CD8-positive, alpha-beta memory T cell (primary cell): ENCODE measurements at regions of chr5 and their contacts with region 1.

Region 1: GRCh38 chr5:134904630-134905245 is at the start of gene PCBD2:
- DNase-seq: peak; percentile 84 to 94 (median 89)
- H3K4me3 ChIP-seq: peak within 1 kb of the TSS; percentile 71
- H3K4me3 Mint-ChIP-seq: peak within 1 kb of the TSS; percentile 93 to 98 (median 96)
- H3K27ac ChIP-seq: peak within 1 kb of the TSS; percentile 87
- H3K27ac Mint-ChIP-seq: peak within 1 kb of the TSS; percentile 97 to 99 (median 99)
- H3K4me1 ChIP-seq: no peaks in the 10 kb centered on the region
- H3K4me1 Mint-ChIP-seq: peaks cover 5 to 12% (median 10%) of the 10 kb centered on the region in 3 donors
- H3K27me3 ChIP-seq: no peaks in the 10 kb centered on the region
- H3K27me3 Mint-ChIP-seq: no peaks in the 10 kb centered on the region
- total RNA-seq, gene PCBD2: 11.5 to 13.6 TPM

Region 2: GRCh38 chr5:134738133-134738962 is 166.4 kb before region 1 on chr5 and contains the start of gene CAMLG:
- CTCF ChIA-PET with region 1: interaction called, 39 read pairs
- POLR2A ChIA-PET with region 1: interaction called, 29 read pairs
- DNase-seq: peak; percentile 95 to 98 (median 96)
- H3K4me3 ChIP-seq: peak within 1 kb of the TSS; percentile 84
- H3K4me3 Mint-ChIP-seq: peak within 1 kb of the TSS; percentile 91 to 97 (median 95)
- H3K27ac ChIP-seq: peak within 1 kb of the TSS; percentile 86
- H3K27ac Mint-ChIP-seq: peak within 1 kb of the TSS; percentile 90 to 98 (median 95)
- H3K4me1 ChIP-seq: peaks cover 19% of the 10 kb centered on the region
- H3K4me1 Mint-ChIP-seq: peaks cover 23 to 42% (median 40%) of the 10 kb centered on the region in 3 donors
- H3K27me3 ChIP-seq: no peaks in the 10 kb centered on the region
- H3K27me3 Mint-ChIP-seq: no peaks in the 10 kb centered on the region
- total RNA-seq, gene CAMLG: 23.1 to 23.6 TPM

Region 3: GRCh38 chr5:134758504-134759341 is 146.0 kb before region 1 on chr5 and contains the start of gene DDX46:
- CTCF ChIA-PET with region 1: interaction called, 11 read pairs
- POLR2A ChIA-PET with region 1: no interaction called
- DNase-seq: peak; percentile 89 to 94 (median 90)
- H3K4me3 ChIP-seq: peak within 1 kb of the TSS; percentile 96
- H3K4me3 Mint-ChIP-seq: peak within 1 kb of the TSS; percentile 96 to 100 (median 100)
- H3K27ac ChIP-seq: peak within 1 kb of the TSS; percentile 78
- H3K27ac Mint-ChIP-seq: peak within 1 kb of the TSS; percentile 83 to 100 (median 98)
- H3K4me1 ChIP-seq: peaks cover 21% of the 10 kb centered on the region
- H3K4me1 Mint-ChIP-seq: peaks cover 36 to 46% (median 44%) of the 10 kb centered on the region in 3 donors
- H3K27me3 ChIP-seq: no peaks in the 10 kb centered on the region
- H3K27me3 Mint-ChIP-seq: no peaks in the 10 kb centered on the region
- total RNA-seq, gene DDX46: 81.3 to 83.8 TPM

Region 4: GRCh38 chr5:134845852-134846640 is 58.7 kb before region 1 on chr5 and contains the start of gene C5orf24:
- CTCF ChIA-PET with region 1: interaction called, 16 read pairs
- POLR2A ChIA-PET with region 1: interaction called, 21 read pairs
- DNase-seq: peak; percentile 84 to 94 (median 90)
- H3K4me3 ChIP-seq: peak within 1 kb of the TSS; percentile 70
- H3K4me3 Mint-ChIP-seq: peak within 1 kb of the TSS; percentile 84 to 96 (median 88)
- H3K27ac ChIP-seq: peak within 1 kb of the TSS; percentile 92
- H3K27ac Mint-ChIP-seq: peak within 1 kb of the TSS; percentile 92 to 98 (median 96)
- H3K4me1 ChIP-seq: peaks cover 25% of the 10 kb centered on the region
- H3K4me1 Mint-ChIP-seq: peaks cover 30 to 40% (median 39%) of the 10 kb centered on the region in 3 donors
- H3K27me3 ChIP-seq: no peaks in the 10 kb centered on the region
- H3K27me3 Mint-ChIP-seq: no peaks in the 10 kb centered on the region
- total RNA-seq, gene C5orf24: 28.9 to 29.8 TPM

Region 5: DNA sequence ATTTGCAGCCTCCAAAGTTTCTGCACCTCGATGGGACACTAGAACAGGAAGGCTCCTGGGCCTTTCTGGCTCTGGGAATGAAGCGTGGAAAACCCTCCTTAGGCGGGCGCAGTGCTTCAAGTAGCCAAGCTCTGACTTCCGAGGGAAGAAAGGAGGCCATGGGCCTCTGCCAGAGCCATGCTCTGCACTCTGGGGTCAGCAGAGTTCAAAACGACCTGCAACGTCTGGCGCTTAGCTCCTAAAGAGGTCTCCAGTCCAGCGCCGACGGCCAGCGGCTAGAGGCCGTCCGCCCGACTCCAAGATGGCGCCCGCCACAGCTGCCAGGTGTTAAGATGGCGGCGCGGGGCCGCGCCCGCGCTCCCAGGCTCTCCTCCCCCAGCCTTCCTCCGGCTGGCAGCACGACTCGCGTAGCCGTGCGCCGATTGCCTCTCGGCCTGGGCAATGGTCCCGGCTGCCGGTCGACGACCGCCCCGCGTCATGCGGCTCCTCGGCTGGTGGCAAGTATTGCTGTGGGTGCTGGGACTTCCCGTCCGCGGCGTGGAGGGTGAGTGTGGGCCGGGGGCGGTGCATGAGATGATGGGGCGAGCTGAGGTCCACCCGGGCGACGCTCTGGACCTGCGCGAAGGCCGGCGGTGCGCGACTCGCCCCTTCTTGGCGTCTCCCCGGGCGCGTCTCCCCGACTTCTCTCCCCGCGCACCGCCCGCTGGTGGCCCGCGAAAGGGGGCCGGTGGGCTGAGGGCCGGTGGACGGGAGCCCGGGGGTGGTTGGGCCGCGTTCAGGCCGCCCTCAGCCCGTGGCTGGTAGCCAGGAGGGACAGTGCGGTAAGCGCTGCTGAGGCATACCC is 30.5 kb before region 1 on chr5 and contains the start of gene TXNDC15:
- CTCF ChIA-PET with region 1: interaction called, 17 read pairs
- POLR2A ChIA-PET with region 1: interaction called, 20 read pairs
- DNase-seq: peak; percentile 73 to 88 (median 79)
- H3K4me3 ChIP-seq: peak within 1 kb of the TSS; percentile 99
- H3K4me3 Mint-ChIP-seq: peak within 1 kb of the TSS; percentile 93 to 99 (median 95)
- H3K27ac ChIP-seq: peak within 1 kb of the TSS; percentile 88
- H3K27ac Mint-ChIP-seq: peak within 1 kb of the TSS; percentile 92 to 99 (median 97)
- H3K4me1 ChIP-seq: peaks cover 34% of the 10 kb centered on the region
- H3K4me1 Mint-ChIP-seq: peaks cover 39 to 48% (median 45%) of the 10 kb centered on the region in 3 donors
- H3K27me3 ChIP-seq: no peaks in the 10 kb centered on the region
- H3K27me3 Mint-ChIP-seq: no peaks in the 10 kb centered on the region
- total RNA-seq, gene TXNDC15: 44.5 to 47.3 TPM

Region 6: GRCh38 chr5:134893748-134894505 is 10.8 kb before region 1 on chr5:
- CTCF ChIA-PET with region 1: interaction called, 17 read pairs
- POLR2A ChIA-PET with region 1: interaction called, 5 read pairs
- DNase-seq: no peak
- H3K4me3 ChIP-seq: no peak overlapping the region
- H3K4me3 Mint-ChIP-seq: no peak overlapping the region
- H3K27ac ChIP-seq: no peak overlapping the region
- H3K27ac Mint-ChIP-seq: peak overlapping the region in 2 of 8 donors; percentile 24 to 33
- H3K4me1 ChIP-seq: no peaks in the 10 kb centered on the region
- H3K4me1 Mint-ChIP-seq: peaks cover 6 to 9% (median 9%) of the 10 kb centered on the region in 3 donors
- H3K27me3 ChIP-seq: no peaks in the 10 kb centered on the region
- H3K27me3 Mint-ChIP-seq: no peaks in the 10 kb centered on the region